Panc1 (cell line): ENCODE measurements at regions of chr1 and their contacts with region 1.

Region 1: GRCh38 chr1:227999056-227999930 is 7.5 kb upstream of the WNT3A start:
- DNase-seq: peak; percentile 48
- ATAC-seq: peak; percentile 97
- H3K4me3 ChIP-seq: no peak overlapping the region
- H3K27ac ChIP-seq: no peak overlapping the region
- H3K4me1 ChIP-seq: no peaks in the 10 kb centered on the region
- H3K27me3 ChIP-seq: no peaks in the 10 kb centered on the region
- CTCF ChIP-seq: peak; percentile 94

Region 2: DNA sequence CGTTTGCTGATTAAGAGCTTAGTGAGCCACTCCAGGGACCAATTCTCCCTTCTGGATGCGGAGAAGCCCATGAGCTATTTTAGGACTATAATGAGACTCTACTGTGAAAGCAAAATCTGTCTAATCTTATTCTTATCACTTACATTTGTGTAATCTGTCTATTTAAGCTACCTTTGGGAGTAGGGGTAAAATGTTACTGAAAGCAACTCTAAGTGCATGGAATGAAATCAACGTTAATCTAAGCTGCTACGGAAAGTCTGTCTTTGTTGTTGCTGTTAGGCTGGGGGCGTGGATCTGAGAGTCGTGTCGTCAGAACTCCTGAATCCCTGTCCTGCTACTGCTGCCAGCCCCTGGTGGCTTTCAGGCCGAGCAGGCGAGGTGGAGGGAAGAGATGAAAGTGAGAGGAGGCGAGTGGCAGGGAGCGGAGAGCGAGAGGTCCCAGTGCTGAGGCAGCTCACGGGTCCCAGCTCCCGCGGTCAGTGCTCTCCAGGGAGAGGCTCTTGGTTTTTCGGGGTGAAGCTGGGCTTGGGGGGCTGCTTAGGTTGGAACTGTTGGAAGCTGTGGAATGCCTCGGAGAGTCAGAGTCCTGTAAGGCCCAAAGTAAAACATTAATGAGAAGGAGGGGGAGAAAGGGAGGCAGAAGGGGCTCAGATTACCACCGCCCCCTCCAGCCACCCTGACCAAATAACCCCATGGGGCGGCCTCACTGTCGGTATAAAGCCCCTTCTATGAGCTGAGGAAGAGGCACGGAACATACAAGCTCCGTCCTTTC is 1005.3 kb before region 1 on chr1:
- CTCF ChIA-PET with region 1: no interaction called
- POLR2A ChIA-PET with region 1: interaction called, 10 read pairs
- in situ Hi-C with region 1: no loop called
- intact Hi-C with region 1: no loop called
- DNase-seq: no peak
- ATAC-seq: no peak
- H3K4me3 ChIP-seq: no peak overlapping the region
- H3K27ac ChIP-seq: no peak overlapping the region
- H3K4me1 ChIP-seq: no peaks in the 10 kb centered on the region
- H3K27me3 ChIP-seq: no peaks in the 10 kb centered on the region
- CTCF ChIP-seq: no peak

Region 3: GRCh38 chr1:228101994-228102790 is 102.9 kb after region 1 on chr1:
- CTCF ChIA-PET with region 1: interaction called, 10 read pairs
- POLR2A ChIA-PET with region 1: no interaction called
- in situ Hi-C with region 1: no loop called
- intact Hi-C with region 1: no loop called
- DNase-seq: no peak
- ATAC-seq: peak; percentile 70
- H3K4me3 ChIP-seq: peak overlapping the region; percentile 71 to 77
- H3K27ac ChIP-seq: peak overlapping the region; percentile 59; the same call in 1 of the 2 replicates
- H3K4me1 ChIP-seq: peaks cover 27% of the 10 kb centered on the region
- H3K27me3 ChIP-seq: no peaks in the 10 kb centered on the region
- CTCF ChIP-seq: no peak; the same call in 1 of the 2 replicates